ENCODE measurements at regions of chr3 and their contacts with region 1.

Region 1: DNA sequence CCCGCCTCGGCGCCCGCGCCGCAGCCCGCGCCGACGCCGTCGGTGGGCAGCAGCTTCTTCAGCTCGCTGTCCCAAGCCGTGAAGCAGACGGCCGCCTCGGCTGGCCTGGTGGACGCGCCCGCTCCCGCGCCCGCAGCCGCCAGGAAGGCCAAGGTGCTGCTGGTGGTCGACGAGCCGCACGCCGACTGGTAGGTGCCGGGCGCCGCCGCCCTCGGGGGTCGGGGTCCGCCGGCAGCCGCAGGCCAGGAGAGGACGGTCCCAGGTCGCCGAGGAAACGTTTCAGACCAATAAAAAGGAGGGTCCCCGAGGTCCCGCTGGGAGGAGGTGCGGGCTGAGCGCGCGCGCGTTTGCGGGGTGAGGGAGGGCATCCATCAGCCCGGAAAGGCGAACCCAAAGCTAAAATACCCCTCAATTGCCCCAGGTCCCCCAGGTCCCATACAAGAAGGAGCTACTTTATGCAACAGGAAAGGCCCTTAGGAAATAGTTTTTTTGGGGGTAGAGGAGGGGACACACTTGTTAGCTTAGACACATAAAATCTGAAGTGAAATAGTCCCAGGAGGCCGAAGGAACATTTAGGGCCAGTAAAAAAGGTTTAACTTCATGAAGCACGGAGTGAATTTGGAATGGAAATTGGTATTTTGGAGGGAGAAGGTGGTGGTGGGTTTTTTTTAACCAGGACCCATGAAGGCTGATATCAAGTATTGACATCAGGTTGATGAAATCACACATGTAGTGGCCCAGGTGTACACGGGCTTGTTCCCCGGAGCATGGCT is 739 bp downstream of the SYN2 start:
- DNase-seq: peak in 1 of 2 experiments; percentile 71
- H3K4me3 ChIP-seq: peak overlapping the region; percentile 52 to 85 (median 72)
- H3K27ac ChIP-seq: no peak overlapping the region
- H3K4me1 ChIP-seq: peaks cover 0 to 16% (median 12%) of the 10 kb centered on the region in 4 experiments; a peak in 6 of 7 replicates
- H3K27me3 ChIP-seq: peaks cover 0 to 10% (median 6%) of the 10 kb centered on the region in 4 experiments; a peak in 3 of 7 replicates
- CTCF ChIP-seq: no peak
- EP300 ChIP-seq: no peak
- POLR2A ChIP-seq: no peak
- RAD21 ChIP-seq: no peak

Region 2: GRCh38 chr3:12017516-12017915 is 12.6 kb after region 1 on chr3:
- CTCF ChIA-PET with region 1: interaction called, 10 read pairs
- POLR2A ChIA-PET with region 1: interaction called, 10 read pairs
- DNase-seq: no peak
- H3K4me3 ChIP-seq: no peak overlapping the region
- H3K27ac ChIP-seq: no peak overlapping the region
- H3K4me1 ChIP-seq: no peaks in the 10 kb centered on the region; a peak in 1 of 7 replicates
- H3K27me3 ChIP-seq: no peaks in the 10 kb centered on the region
- CTCF ChIP-seq: no peak
- EP300 ChIP-seq: no peak
- POLR2A ChIP-seq: no peak
- RAD21 ChIP-seq: no peak

Region 3: GRCh38 chr3:12024959-12025645 is 20.2 kb after region 1 on chr3:
- CTCF ChIA-PET with region 1: interaction called, 10 read pairs
- POLR2A ChIA-PET with region 1: interaction called, 4 read pairs
- DNase-seq: no peak
- H3K4me3 ChIP-seq: no peak overlapping the region
- H3K27ac ChIP-seq: no peak overlapping the region; the same call in 1 of the 2 replicates
- H3K4me1 ChIP-seq: peaks cover 3 to 13% (median 8%) of the 10 kb centered on the region in 4 experiments; a peak in 6 of 7 replicates
- H3K27me3 ChIP-seq: no peaks in the 10 kb centered on the region
- CTCF ChIP-seq: no peak
- EP300 ChIP-seq: no peak
- POLR2A ChIP-seq: no peak
- RAD21 ChIP-seq: no peak